PC-3 (cell line): ENCODE measurements at regions of chr19 and their contacts with region 1.

Region 1: GRCh38 chr19:33241530-33242101 is 16.0 kb upstream of the SLC7A10 start:
- DNase-seq: peak; percentile 4
- ATAC-seq: peak; percentile 55
- H3K4me3 ChIP-seq: no peak overlapping the region
- H3K27ac ChIP-seq: no peak overlapping the region
- H3K4me1 ChIP-seq: no peaks in the 10 kb centered on the region
- H3K27me3 ChIP-seq: no peaks in the 10 kb centered on the region
- CTCF ChIP-seq: peak; percentile 70

Region 2: DNA sequence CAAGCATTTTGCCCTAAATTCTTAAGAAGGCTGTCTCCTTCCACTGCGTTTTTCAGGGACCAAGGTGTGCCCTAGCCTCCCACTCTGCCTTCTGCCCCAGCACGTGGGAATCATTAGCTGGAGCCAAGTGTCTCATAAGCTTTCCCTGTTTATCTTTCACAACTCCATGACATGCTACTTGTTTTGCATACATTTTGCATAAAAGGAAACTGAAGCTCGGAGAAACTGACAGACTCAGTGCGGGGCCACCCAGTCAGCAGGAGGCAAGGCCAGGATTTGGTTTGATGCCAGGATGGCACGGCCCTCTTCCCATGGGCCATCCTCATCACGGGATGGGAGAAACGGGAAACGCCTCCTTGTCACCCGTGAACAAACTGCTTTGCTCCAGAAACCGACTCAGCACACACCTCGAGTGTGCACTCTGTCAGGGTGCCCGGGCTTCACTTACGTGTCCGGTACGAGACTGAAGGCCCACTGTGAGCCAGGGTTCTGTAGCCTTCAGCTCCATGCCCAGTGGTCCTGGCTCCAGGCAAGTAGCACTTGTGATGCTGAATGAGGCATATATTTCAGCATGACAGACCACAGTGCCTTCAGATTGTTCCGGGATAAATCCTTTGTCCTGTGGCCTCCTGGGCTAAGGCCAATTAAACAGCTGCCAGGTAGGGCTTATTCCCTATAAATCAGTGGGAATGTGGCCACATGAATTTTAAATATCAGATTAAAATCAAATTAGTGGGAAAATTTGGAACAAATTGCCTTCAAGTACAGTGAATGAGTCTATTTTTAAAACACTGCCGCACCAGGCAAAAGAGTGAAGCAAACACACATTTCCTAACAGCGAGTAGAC is 51.2 kb after region 1 on chr19:
- CTCF ChIA-PET with region 1: no interaction called
- POLR2A ChIA-PET with region 1: no interaction called
- intact Hi-C with region 1: loop called (anchors 10 kb)
- DNase-seq: peak; percentile 21
- ATAC-seq: peak; percentile 37
- H3K4me3 ChIP-seq: peak overlapping the region; percentile 43
- H3K27ac ChIP-seq: peak overlapping the region; percentile 86
- H3K4me1 ChIP-seq: peaks cover 43% of the 10 kb centered on the region
- H3K27me3 ChIP-seq: no peaks in the 10 kb centered on the region
- CTCF ChIP-seq: no peak

Region 3: GRCh38 chr19:33406521-33407139 is 165.0 kb after region 1 on chr19:
- CTCF ChIA-PET with region 1: no interaction called
- POLR2A ChIA-PET with region 1: no interaction called
- intact Hi-C with region 1: loop called (anchors 2 kb)
- DNase-seq: peak; percentile 73
- ATAC-seq: peak; percentile 79
- H3K4me3 ChIP-seq: no peak overlapping the region
- H3K27ac ChIP-seq: no peak overlapping the region
- H3K4me1 ChIP-seq: no peaks in the 10 kb centered on the region
- H3K27me3 ChIP-seq: no peaks in the 10 kb centered on the region
- CTCF ChIP-seq: peak; percentile 70

Region 4: DNA sequence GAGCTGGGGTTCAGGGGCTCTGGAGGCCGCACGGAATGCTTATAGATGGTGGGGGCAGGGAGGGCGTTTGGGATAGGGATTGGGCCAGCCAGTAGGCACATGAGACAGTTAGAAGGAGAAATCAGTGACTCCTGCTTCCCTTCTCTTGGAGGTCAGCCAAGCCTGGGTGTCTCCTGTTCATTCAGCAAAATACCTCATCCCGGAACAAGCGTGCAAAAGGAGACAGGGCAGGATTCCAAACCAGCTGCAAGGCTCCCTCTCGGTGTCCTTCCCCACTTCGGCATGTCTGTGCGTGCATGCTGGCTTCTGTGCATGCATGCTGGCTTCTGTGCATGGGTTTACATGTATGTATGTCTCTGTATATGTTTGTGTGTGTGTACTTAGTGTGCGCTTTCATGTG is 317.2 kb after region 1 on chr19:
- CTCF ChIA-PET with region 1: no interaction called
- POLR2A ChIA-PET with region 1: no interaction called
- intact Hi-C with region 1: no loop called
- DNase-seq: no peak
- ATAC-seq: no peak
- H3K4me3 ChIP-seq: no peak overlapping the region
- H3K27ac ChIP-seq: no peak overlapping the region
- H3K4me1 ChIP-seq: no peaks in the 10 kb centered on the region
- H3K27me3 ChIP-seq: no peaks in the 10 kb centered on the region
- CTCF ChIP-seq: no peak